ENCODE measurements at regions of chr5 and their contacts with region 1.

Region 1: GRCh38 chr5:55062039-55062779 is 38.2 kb downstream of the GZMK start:
- DNase-seq: peak in 7 of 9 donors; percentile 25 to 71 (median 46)
- ATAC-seq: peak; percentile 81
- H3K4me3 ChIP-seq: peak overlapping the region; percentile 33
- H3K4me3 Mint-ChIP-seq: peak overlapping the region; percentile 43 to 94 (median 82)
- H3K27ac ChIP-seq: no peak overlapping the region
- H3K27ac Mint-ChIP-seq: peak overlapping the region; percentile 17 to 98 (median 62)
- H3K4me1 ChIP-seq: peaks cover 26 to 30% of the 10 kb centered on the region in 2 donors
- H3K4me1 Mint-ChIP-seq: peaks cover 28 to 80% (median 67%) of the 10 kb centered on the region in 7 donors
- H3K27me3 ChIP-seq: no peaks in the 10 kb centered on the region
- H3K27me3 Mint-ChIP-seq: peaks cover 0 to 7% (median 0%) of the 10 kb centered on the region in 5 donors

Region 2: GRCh38 chr5:55072666-55073065 is 10.5 kb after region 1 on chr5:
- CTCF ChIA-PET with region 1: interaction called, 6 read pairs
- POLR2A ChIA-PET with region 1: interaction called, 13 read pairs
- intact Hi-C with region 1: loop called (anchors 1 kb)
- DNase-seq: peak in 7 of 9 donors; percentile 48 to 81 (median 70)
- ATAC-seq: peak; percentile 90
- H3K4me3 ChIP-seq: peak overlapping the region; percentile 28
- H3K4me3 Mint-ChIP-seq: peak overlapping the region; percentile 22 to 77 (median 60)
- H3K27ac ChIP-seq: peak overlapping the region; percentile 40
- H3K27ac Mint-ChIP-seq: peak overlapping the region; percentile 47 to 95 (median 69)
- H3K4me1 ChIP-seq: peaks cover 27 to 35% of the 10 kb centered on the region in 2 donors
- H3K4me1 Mint-ChIP-seq: peaks cover 15 to 54% (median 43%) of the 10 kb centered on the region in 7 donors
- H3K27me3 ChIP-seq: no peaks in the 10 kb centered on the region
- H3K27me3 Mint-ChIP-seq: no peaks in the 10 kb centered on the region

Measured in naive thymus-derived CD4-positive, alpha-beta T cell (primary cell).